Ovary (tissue), 10 donors: ENCODE measurements at regions of chr14 and their contacts with region 1.

Region 1: GRCh38 chr14:39174560-39175444 is at the start of gene PNN:
- DNase-seq: peak; percentile 95 to 98 (median 96)
- H3K4me3 ChIP-seq: peak within 1 kb of the TSS; percentile 75
- H3K27ac ChIP-seq: peak within 1 kb of the TSS; percentile 37 to 78
- H3K4me1 ChIP-seq: no peaks in the 10 kb centered on the region
- H3K27me3 ChIP-seq: no peaks in the 10 kb centered on the region
- CTCF ChIP-seq: no peak
- EP300 ChIP-seq: peak; percentile 43
- POLR2A ChIP-seq: peak; percentile 90
- total RNA-seq, gene PNN: 36.3 to 76.3 (median 59.6) TPM

Region 2: GRCh38 chr14:39102969-39103957 is 71.5 kb before region 1 on chr14 and contains the start of gene SEC23A:
- intact Hi-C with region 1: loop called in 1 of 4 experiments (anchors 2 kb)
- DNase-seq: peak; percentile 86 to 91 (median 89)
- H3K4me3 ChIP-seq: peak within 1 kb of the TSS; percentile 77
- H3K27ac ChIP-seq: peak within 1 kb of the TSS; percentile 85 to 97
- H3K4me1 ChIP-seq: peaks cover 2% of the 10 kb centered on the region
- H3K27me3 ChIP-seq: no peaks in the 10 kb centered on the region
- CTCF ChIP-seq: no peak
- EP300 ChIP-seq: no peak
- POLR2A ChIP-seq: peak; percentile 76
- total RNA-seq, gene SEC23A: 52.9 to 93.2 (median 87.3) TPM

Region 3: DNA sequence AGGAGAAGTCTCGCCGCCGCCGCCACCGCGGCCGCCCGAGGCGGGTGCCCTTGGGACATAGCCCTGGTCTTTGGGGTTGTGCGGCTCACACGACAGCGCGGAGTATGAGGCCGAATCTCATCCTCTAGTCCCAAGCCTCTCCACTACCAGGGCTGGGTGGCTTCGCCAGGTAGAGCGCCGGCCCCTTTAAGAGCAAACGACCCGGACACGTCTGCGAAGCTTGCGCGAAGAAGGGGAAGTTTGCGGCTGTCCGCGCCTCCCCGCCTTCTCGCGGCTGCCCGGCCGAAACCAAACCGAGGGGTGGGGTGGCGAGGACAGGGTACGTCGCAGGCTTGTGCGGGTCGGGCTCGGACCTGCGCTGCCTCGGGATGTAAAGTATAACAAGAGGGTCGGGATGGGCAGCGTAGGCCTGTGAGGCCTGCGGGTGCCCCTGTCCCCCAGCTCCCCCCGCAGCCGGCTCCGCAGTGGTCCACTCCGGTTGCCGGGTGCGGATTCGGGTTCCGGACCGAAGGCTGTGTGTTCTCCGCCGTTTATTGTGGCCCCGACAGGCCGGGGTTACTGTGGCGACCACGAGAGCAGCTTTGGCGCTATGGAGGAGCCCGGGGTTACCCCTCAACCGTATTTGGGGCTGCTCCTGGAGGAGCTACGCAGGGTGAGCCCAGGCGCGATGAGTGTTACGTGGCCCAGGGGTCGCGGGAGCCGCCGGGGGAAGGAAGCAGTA is 92.2 kb after region 1 on chr14:
- intact Hi-C with region 1: loop called in 3 of 4 experiments (anchors 2 to 10 kb)
- DNase-seq: peak; percentile 77 to 86 (median 79)
- H3K4me3 ChIP-seq: peak overlapping the region; percentile 80
- H3K27ac ChIP-seq: peak overlapping the region; percentile 96 to 97
- H3K4me1 ChIP-seq: peaks cover 1% of the 10 kb centered on the region
- H3K27me3 ChIP-seq: no peaks in the 10 kb centered on the region
- CTCF ChIP-seq: no peak
- EP300 ChIP-seq: no peak
- POLR2A ChIP-seq: peak; percentile 46

Region 4: DNA sequence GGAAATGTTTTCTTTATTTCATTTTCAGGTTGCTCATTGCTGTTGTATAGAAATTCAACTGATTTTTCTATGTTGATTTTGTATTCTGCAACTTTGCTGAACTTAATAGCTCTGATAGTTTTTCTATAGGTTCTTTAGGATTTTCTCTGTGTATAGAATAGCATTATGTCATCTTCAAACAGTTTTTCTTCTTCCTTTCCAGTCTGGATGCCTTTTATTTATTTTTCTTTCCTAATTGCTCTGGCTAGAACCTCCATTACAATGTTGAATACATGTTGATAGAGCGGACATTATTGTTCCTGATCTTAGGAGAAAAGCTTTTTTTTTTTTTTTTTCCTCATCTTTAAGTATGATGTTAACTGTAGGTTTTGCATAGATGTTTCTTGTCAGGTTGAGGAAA is 98.1 kb after region 1 on chr14:
- intact Hi-C with region 1: loop called in 2 of 4 experiments (anchors 5 to 10 kb)
- DNase-seq: no peak
- H3K4me3 ChIP-seq: no peak overlapping the region
- H3K27ac ChIP-seq: no peak overlapping the region
- H3K4me1 ChIP-seq: peaks cover 1% of the 10 kb centered on the region
- H3K27me3 ChIP-seq: no peaks in the 10 kb centered on the region
- CTCF ChIP-seq: no peak
- EP300 ChIP-seq: no peak
- POLR2A ChIP-seq: no peak

Region 5: GRCh38 chr14:39368261-39368959 is 193.6 kb after region 1 on chr14:
- intact Hi-C with region 1: no loop called
- DNase-seq: peak; percentile 45 to 70 (median 55)
- H3K4me3 ChIP-seq: no peak overlapping the region
- H3K27ac ChIP-seq: no peak overlapping the region
- H3K4me1 ChIP-seq: no peaks in the 10 kb centered on the region
- H3K27me3 ChIP-seq: no peaks in the 10 kb centered on the region
- CTCF ChIP-seq: no peak
- EP300 ChIP-seq: no peak
- POLR2A ChIP-seq: no peak

Region 6: GRCh38 chr14:39417014-39417413 is 242.2 kb after region 1 on chr14:
- intact Hi-C with region 1: no loop called
- DNase-seq: no peak
- H3K4me3 ChIP-seq: no peak overlapping the region
- H3K27ac ChIP-seq: no peak overlapping the region
- H3K4me1 ChIP-seq: no peaks in the 10 kb centered on the region
- H3K27me3 ChIP-seq: no peaks in the 10 kb centered on the region
- CTCF ChIP-seq: no peak
- EP300 ChIP-seq: no peak
- POLR2A ChIP-seq: no peak

Region 7: GRCh38 chr14:39432179-39432618 is 257.4 kb after region 1 on chr14 and contains the start of gene FBXO33:
- intact Hi-C with region 1: loop called in 2 of 4 experiments (anchors 1 to 5 kb)
- DNase-seq: peak; percentile 95 to 98 (median 96)
- H3K4me3 ChIP-seq: peak within 1 kb of the TSS; percentile 83
- H3K27ac ChIP-seq: peak within 1 kb of the TSS; percentile 93 to 98
- H3K4me1 ChIP-seq: peaks cover 3% of the 10 kb centered on the region
- H3K27me3 ChIP-seq: no peaks in the 10 kb centered on the region
- CTCF ChIP-seq: peak in 1 of 3 donors; percentile 28
- EP300 ChIP-seq: peak; percentile 61
- POLR2A ChIP-seq: no peak
- total RNA-seq, gene FBXO33: 7.8 to 22.2 (median 9.0) TPM

Region 8: GRCh38 chr14:39459795-39460478 is 285.1 kb after region 1 on chr14:
- intact Hi-C with region 1: no loop called
- DNase-seq: no peak
- H3K4me3 ChIP-seq: no peak overlapping the region
- H3K27ac ChIP-seq: no peak overlapping the region
- H3K4me1 ChIP-seq: no peaks in the 10 kb centered on the region
- H3K27me3 ChIP-seq: no peaks in the 10 kb centered on the region
- CTCF ChIP-seq: no peak
- EP300 ChIP-seq: no peak
- POLR2A ChIP-seq: no peak